Activated B cell treated with CpG ODN at 0.5 μM for 24 hours (primary cell): ENCODE measurements at regions of chr13 and their contacts with region 1.

Region 1: GRCh38 chr13:114132419-114133121 is at the start of gene RASA3:
- DNase-seq: peak; percentile 73
- ATAC-seq: peak; percentile 67
- H3K4me3 Mint-ChIP-seq: peak within 1 kb of the TSS; percentile 93
- H3K27ac Mint-ChIP-seq: peak within 1 kb of the TSS; percentile 76
- H3K4me1 Mint-ChIP-seq: peaks cover 56% of the 10 kb centered on the region
- H3K27me3 Mint-ChIP-seq: no peaks in the 10 kb centered on the region
- CTCF ChIP-seq: no peak
- total RNA-seq, gene RASA3: 17.5 and 20.4 TPM in 2 replicates

Region 2: GRCh38 chr13:113816946-113817859 is 315.4 kb before region 1 on chr13:
- CTCF ChIA-PET with region 1: no interaction called
- POLR2A ChIA-PET with region 1: no interaction called
- intact Hi-C with region 1: loop called (anchors 5 kb)
- DNase-seq: peak; percentile 69
- ATAC-seq: peak; percentile 87
- H3K4me3 Mint-ChIP-seq: peak overlapping the region; percentile 98
- H3K27ac Mint-ChIP-seq: peak overlapping the region; percentile 70
- H3K4me1 Mint-ChIP-seq: peaks cover 24% of the 10 kb centered on the region
- H3K27me3 Mint-ChIP-seq: no peaks in the 10 kb centered on the region
- CTCF ChIP-seq: no peak

Region 3: DNA sequence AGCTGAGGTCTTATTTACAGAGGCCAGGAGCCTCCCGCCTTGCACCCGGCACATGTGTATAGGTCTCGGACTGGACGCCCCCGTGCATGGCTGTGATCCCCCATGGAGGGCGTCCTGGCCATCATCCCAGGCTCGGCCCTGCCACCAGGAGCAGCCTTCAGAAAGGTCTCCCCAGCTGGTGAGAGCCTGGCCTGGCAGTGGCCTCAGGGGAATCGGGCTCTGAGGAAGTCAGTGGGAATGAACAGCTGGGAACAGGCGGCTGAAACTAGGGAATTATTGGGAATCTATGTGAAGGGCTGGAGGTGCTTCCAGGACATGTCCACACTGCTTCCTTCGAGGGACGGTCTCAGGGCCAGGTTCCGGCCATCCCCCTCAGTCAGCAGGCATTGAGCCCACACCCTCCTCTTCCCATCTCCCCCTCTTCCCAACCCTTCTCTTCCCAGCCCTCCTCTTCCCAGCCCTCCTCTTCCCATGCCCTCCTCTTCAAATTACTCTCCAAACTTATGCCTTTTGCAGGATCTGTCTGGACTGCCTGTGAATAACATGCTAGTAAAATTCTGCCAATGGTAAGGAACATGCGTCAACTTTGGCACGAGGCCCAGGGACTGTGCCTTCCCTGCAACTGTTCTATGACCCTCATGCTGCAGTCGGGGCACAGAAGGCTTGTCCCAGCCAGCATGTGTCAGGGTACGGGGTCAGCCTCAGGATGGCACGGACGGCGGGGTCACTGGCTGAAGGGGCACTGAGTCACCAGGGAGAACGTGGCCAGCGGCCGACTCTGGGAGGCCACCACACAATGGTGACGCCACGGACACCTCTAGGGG is 134.5 kb before region 1 on chr13:
- CTCF ChIA-PET with region 1: no interaction called
- POLR2A ChIA-PET with region 1: no interaction called
- intact Hi-C with region 1: no loop called
- DNase-seq: no peak
- ATAC-seq: no peak
- H3K4me3 Mint-ChIP-seq: no peak overlapping the region
- H3K27ac Mint-ChIP-seq: no peak overlapping the region
- H3K4me1 Mint-ChIP-seq: no peaks in the 10 kb centered on the region
- H3K27me3 Mint-ChIP-seq: no peaks in the 10 kb centered on the region
- CTCF ChIP-seq: no peak

Region 4: DNA sequence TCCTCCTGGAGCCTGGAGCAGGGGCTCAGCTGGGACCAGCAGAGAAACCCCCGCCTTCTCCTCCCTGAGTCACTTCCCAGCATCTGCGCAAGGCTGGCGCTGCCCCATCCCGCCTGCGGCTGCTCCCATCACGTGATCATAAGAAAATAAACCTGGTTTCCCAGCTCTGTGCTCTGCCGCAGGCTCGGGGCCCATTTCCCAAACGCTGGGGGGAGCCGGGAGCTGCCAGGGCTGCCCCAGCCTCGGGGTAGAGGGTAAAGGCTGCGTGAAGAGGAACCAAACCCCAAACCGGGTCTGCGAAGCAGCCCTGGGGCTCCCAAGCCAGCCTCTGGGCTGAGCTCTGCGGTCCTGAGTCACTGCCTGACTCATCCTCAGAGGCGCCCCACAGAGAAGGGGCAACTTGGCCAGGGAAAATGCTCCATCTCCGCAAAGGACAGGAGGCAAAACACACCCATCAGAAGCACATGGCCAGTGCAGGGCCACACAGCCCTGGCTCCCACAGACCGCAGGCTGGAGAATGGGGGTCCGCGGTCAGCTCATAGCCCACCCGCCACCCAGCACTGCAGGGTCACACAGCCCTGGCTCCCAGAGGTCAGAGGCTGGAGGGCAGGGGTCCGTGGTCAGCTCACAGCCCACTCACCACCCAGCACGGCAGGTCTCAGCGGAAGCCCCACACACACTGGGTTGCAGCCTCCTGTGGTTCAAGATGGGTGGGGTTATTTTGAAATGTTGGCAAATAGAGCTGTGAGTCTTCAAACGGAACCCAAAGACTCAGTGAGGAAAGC is 67.2 kb before region 1 on chr13:
- CTCF ChIA-PET with region 1: no interaction called
- POLR2A ChIA-PET with region 1: interaction called, 6 read pairs
- intact Hi-C with region 1: loop called (anchors 1 kb)
- DNase-seq: peak; percentile 61
- ATAC-seq: peak; percentile 81
- H3K4me3 Mint-ChIP-seq: peak overlapping the region; percentile 82
- H3K27ac Mint-ChIP-seq: peak overlapping the region; percentile 91
- H3K4me1 Mint-ChIP-seq: peaks cover 68% of the 10 kb centered on the region
- H3K27me3 Mint-ChIP-seq: no peaks in the 10 kb centered on the region
- CTCF ChIP-seq: no peak

Region 5: GRCh38 chr13:114143806-114144605 is 11.4 kb after region 1 on chr13:
- CTCF ChIA-PET with region 1: interaction called, 3 read pairs
- POLR2A ChIA-PET with region 1: interaction called, 15 read pairs
- intact Hi-C with region 1: loop called (anchors 1 kb)
- DNase-seq: peak; percentile 45
- ATAC-seq: peak; percentile 66
- H3K4me3 Mint-ChIP-seq: no peak overlapping the region
- H3K27ac Mint-ChIP-seq: peak overlapping the region; percentile 26
- H3K4me1 Mint-ChIP-seq: peaks cover 13% of the 10 kb centered on the region
- H3K27me3 Mint-ChIP-seq: no peaks in the 10 kb centered on the region
- CTCF ChIP-seq: no peak

Region 6: GRCh38 chr13:114154476-114154875 is 21.9 kb after region 1 on chr13:
- CTCF ChIA-PET with region 1: no interaction called
- POLR2A ChIA-PET with region 1: no interaction called
- intact Hi-C with region 1: no loop called
- DNase-seq: no peak
- ATAC-seq: peak; percentile 74
- H3K4me3 Mint-ChIP-seq: peak overlapping the region; percentile 24
- H3K27ac Mint-ChIP-seq: no peak overlapping the region
- H3K4me1 Mint-ChIP-seq: peaks cover 40% of the 10 kb centered on the region
- H3K27me3 Mint-ChIP-seq: peaks cover 5% of the 10 kb centered on the region
- CTCF ChIP-seq: no peak

Region 7: DNA sequence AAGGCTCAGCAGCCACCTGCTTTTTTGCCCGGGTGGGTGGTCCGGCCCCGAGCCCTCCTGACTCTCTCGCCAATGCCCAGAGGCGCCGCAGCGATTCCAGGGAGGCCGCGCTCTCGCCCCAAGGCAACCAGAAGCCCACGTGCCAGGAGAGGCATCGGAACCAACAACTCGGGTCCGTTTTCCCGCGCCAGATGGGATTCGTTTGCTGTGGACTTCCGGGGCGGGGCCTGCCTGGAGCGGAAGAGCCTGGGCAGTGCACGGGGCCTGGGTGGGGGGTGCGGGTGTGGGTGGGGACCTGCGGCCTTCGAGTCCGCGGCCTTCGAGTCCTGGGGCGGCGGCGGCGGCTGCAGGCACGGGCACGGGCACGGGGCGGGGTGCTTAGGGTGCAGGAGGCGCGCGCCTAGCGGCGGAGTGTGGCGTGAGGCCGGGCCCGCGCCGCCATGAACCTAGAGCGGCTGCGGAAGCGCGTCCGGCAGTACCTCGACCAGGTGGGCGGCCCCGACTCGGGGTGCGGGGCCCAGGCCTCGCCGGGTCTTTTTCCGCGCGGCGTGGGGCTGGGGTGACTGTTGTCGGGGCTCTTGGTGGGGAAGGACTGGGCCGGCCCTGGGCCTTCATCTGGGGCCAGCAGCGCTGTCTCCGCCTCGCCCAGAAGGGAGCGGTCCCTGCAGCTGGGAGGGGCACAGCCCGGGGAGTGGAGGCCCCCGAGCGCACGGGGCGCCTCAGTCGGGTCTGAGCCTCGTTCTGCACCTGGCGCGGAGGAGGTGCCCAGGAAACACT is 102.3 kb after region 1 on chr13 and contains the start of gene CDC16:
- CTCF ChIA-PET with region 1: no interaction called
- POLR2A ChIA-PET with region 1: no interaction called
- intact Hi-C with region 1: loop called (anchors 2 kb)
- DNase-seq: peak; percentile 79
- ATAC-seq: peak; percentile 85
- H3K4me3 Mint-ChIP-seq: peak within 1 kb of the TSS; percentile 86
- H3K27ac Mint-ChIP-seq: peak within 1 kb of the TSS; percentile 88
- H3K4me1 Mint-ChIP-seq: peaks cover 22% of the 10 kb centered on the region
- H3K27me3 Mint-ChIP-seq: peaks cover 10% of the 10 kb centered on the region
- CTCF ChIP-seq: no peak
- total RNA-seq, gene CDC16: 84.2 and 98.0 TPM in 2 replicates